ENCODE measurements at regions of chr11 and their contacts with region 1.

Region 1: DNA sequence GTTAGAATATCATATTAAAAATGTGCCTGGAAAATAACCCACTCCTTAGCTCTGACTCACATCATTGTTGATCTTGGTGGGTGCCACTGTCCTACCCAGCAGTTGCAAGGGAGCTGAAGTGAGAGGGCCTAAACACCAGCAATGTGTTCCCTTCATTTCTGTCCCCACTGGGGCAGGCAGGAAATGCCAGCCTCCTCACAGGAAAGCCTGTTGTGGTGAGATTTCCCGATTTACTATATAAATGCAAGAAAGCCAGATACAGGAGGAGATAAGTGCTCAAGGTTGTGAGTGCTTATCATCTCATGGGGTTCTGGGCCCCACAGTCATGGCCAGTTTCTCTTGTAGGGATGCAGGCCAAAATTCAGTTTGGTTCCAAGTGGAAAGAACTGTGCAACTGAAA is 15.8 kb upstream of the FLI1 start:
- DNase-seq: peak; percentile 90
- H3K4me3 ChIP-seq: no peak overlapping the region
- H3K27ac ChIP-seq: peak overlapping the region; percentile 53
- H3K4me1 ChIP-seq: peaks cover 28% of the 10 kb centered on the region
- H3K27me3 ChIP-seq: no peaks in the 10 kb centered on the region
- CTCF ChIP-seq: no peak
- POLR2A ChIP-seq: peak; percentile 80

Region 2: GRCh38 chr11:128472128-128473089 is 205.6 kb before region 1 on chr11:
- CTCF ChIA-PET with region 1: no interaction called
- POLR2A ChIA-PET with region 1: no interaction called
- dilution Hi-C with region 1: no loop called
- intact Hi-C with region 1: no loop called
- DNase-seq: peak; percentile 45
- H3K4me3 ChIP-seq: no peak overlapping the region
- H3K27ac ChIP-seq: no peak overlapping the region
- H3K4me1 ChIP-seq: peaks cover 22% of the 10 kb centered on the region
- H3K27me3 ChIP-seq: no peaks in the 10 kb centered on the region
- CTCF ChIP-seq: no peak
- POLR2A ChIP-seq: no peak

Region 3: DNA sequence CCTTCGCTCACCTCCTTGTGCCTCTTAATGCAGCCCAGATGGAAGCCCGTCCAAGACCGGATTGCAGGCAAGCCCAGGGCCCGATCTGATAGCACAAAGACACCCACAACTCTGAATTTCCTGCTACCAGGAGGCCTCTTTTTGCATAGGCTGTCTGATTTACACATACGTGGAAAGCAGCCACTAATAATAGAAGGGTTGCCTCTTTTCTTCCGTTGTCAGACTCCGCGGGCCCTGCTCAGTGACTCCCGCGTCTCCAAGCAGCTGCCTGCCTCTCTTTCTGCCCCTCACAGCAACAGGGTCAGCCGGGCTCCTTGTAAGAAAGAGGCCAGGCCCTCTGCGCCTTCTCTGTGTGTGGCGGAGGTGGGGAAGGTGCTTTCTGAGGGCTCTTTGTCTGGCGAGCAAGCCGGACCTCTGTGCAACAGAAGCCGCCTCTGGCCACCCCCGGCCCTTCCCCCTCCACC is 42.5 kb after region 1 on chr11:
- CTCF ChIA-PET with region 1: no interaction called
- POLR2A ChIA-PET with region 1: no interaction called
- dilution Hi-C with region 1: no loop called
- intact Hi-C with region 1: loop called (anchors 1 kb)
- DNase-seq: peak; percentile 58
- H3K4me3 ChIP-seq: no peak overlapping the region
- H3K27ac ChIP-seq: peak overlapping the region; percentile 51
- H3K4me1 ChIP-seq: peaks cover 61% of the 10 kb centered on the region
- H3K27me3 ChIP-seq: no peaks in the 10 kb centered on the region
- CTCF ChIP-seq: no peak
- POLR2A ChIP-seq: no peak

Measured in endothelial cell of umbilical vein (primary cell).